ENCODE measurements at regions of chr2 and their contacts with region 1.

Region 1: GRCh38 chr2:69946351-69947077 is 14.9 kb downstream of the ASPRV1 start:
- DNase-seq: peak; percentile 78
- H3K4me3 Mint-ChIP-seq: no peak overlapping the region
- H3K27ac Mint-ChIP-seq: peak overlapping the region; percentile 60
- H3K4me1 Mint-ChIP-seq: peaks cover 28% of the 10 kb centered on the region
- H3K27me3 Mint-ChIP-seq: no peaks in the 10 kb centered on the region

Region 2: DNA sequence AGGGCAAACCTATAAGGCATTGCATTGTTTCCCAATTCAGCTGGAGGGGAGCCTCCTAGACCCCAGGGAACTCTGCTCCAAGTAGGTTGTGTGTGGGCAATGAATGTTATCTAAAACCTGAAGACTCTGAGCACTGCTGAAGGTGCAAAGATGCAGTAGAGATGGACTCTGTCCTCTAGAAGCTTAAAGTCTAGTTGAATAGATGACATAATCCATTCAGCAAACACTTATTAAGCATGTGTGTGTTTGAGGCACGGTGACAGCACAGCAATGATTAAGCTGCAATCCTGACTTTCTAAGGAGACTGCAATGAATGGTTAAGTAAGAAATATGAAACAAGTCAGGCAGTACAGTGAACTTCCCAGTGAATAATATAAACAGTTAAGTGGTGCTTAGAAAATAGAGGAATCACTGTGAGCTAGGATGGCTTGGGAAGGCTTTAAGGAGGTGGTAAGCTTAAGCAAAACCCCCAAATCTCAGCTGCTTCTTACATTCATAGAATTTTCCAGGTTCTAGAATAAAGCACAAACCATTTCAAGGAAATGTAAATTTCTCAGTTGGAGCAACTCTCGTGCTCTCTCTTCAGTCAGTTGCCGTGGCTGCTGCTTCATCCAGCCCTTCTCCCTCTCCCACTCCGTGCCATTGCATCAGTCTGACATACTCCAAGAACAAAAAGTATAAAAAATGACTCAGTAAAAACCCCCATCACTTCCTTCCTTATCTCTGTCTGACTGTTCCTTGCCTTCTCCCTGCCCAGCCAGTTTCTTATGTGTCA is 12.5 kb before region 1 on chr2:
- CTCF ChIA-PET with region 1: interaction called, 5 read pairs
- intact Hi-C with region 1: loop called (anchors 1 kb)
- DNase-seq: peak; percentile 48
- H3K4me3 Mint-ChIP-seq: no peak overlapping the region
- H3K27ac Mint-ChIP-seq: no peak overlapping the region
- H3K4me1 Mint-ChIP-seq: peaks cover 26% of the 10 kb centered on the region
- H3K27me3 Mint-ChIP-seq: no peaks in the 10 kb centered on the region

Region 3: GRCh38 chr2:70070541-70071268 is 124.2 kb after region 1 on chr2:
- CTCF ChIA-PET with region 1: no interaction called
- intact Hi-C with region 1: loop called (anchors 1 kb)
- DNase-seq: peak; percentile 76
- H3K4me3 Mint-ChIP-seq: peak overlapping the region; percentile 54
- H3K27ac Mint-ChIP-seq: peak overlapping the region; percentile 94
- H3K4me1 Mint-ChIP-seq: peaks cover 57% of the 10 kb centered on the region
- H3K27me3 Mint-ChIP-seq: no peaks in the 10 kb centered on the region

Measured in activated naive CD4-positive, alpha-beta T cell treated with anti-CD3 and anti-CD28 coated beads for 36 hours (primary cell).